ENCODE measurements at regions of chr4 and their contacts with region 1.

Region 1: GRCh38 chr4:137124278-137124932 is 407.9 kb downstream of the PCDH18 start:
- DNase-seq: no peak
- ATAC-seq: peak; percentile 80 to 99 (median 89)
- H3K4me3 ChIP-seq: peak overlapping the region in 10 of 12 donors; percentile 5 to 59 (median 40)
- H3K27ac ChIP-seq: no peak overlapping the region
- H3K4me1 ChIP-seq: no peaks in the 10 kb centered on the region
- H3K27me3 ChIP-seq: no peaks in the 10 kb centered on the region
- CTCF ChIP-seq: peak; percentile 33 to 75 (median 63)
- POLR2A ChIP-seq: no peak

Region 2: DNA sequence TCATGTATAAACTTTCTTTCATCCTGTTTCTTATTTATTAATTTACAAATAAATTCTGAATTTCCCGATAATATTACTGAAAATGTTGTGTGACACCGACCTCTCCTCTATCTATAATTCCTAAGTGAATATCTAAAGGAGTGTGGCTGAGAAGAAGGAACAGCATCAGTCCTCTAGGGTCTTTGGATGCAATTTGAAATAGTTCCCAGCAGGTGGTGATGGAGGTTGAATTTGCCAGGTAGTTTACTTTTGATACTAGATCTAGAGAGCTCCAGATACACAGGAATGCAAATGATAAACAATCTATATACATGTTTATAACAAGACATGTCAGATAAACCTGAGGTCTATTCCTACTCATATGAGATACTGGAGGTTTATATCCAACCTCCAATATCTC is 102.5 kb after region 1 on chr4:
- intact Hi-C with region 1: no loop called
- DNase-seq: no peak
- ATAC-seq: no peak
- H3K4me3 ChIP-seq: no peak overlapping the region
- H3K27ac ChIP-seq: no peak overlapping the region
- H3K4me1 ChIP-seq: no peaks in the 10 kb centered on the region
- H3K27me3 ChIP-seq: no peaks in the 10 kb centered on the region
- CTCF ChIP-seq: peak in 4 of 12 donors; percentile 15 to 31 (median 16)
- POLR2A ChIP-seq: no peak

Region 3: GRCh38 chr4:137524725-137525369 is 400.4 kb after region 1 on chr4:
- intact Hi-C with region 1: loop called in 3 of 10 experiments (anchors 10 kb)
- DNase-seq: no peak
- ATAC-seq: no peak
- H3K4me3 ChIP-seq: peak overlapping the region in 1 of 12 donors; percentile 25
- H3K27ac ChIP-seq: peak overlapping the region in 1 of 12 donors; percentile 6
- H3K4me1 ChIP-seq: peaks cover 0 to 28% (median 0%) of the 10 kb centered on the region in 12 donors
- H3K27me3 ChIP-seq: no peaks in the 10 kb centered on the region
- CTCF ChIP-seq: no peak
- POLR2A ChIP-seq: no peak

Region 4: DNA sequence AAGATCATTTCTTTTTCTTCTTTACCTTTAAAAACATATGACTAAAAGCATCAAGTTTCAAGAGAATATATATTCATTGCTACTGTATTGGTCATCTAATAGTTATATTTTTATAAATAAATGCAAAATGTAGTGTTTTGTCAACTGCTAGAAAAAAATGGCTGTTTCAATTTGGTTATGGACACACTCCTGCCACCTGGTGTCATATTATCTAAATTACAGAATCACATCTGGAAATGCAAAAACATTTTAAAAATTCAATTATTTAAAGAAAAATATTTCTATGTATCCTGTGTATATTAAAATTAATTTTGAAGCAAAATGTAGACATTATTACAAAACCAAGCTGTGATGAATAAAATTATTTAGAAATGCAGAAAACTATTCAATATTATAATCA is 737.3 kb after region 1 on chr4:
- intact Hi-C with region 1: loop called in 9 of 10 experiments (anchors 5 kb)
- DNase-seq: no peak
- ATAC-seq: no peak
- H3K4me3 ChIP-seq: no peak overlapping the region
- H3K27ac ChIP-seq: no peak overlapping the region
- H3K4me1 ChIP-seq: no peaks in the 10 kb centered on the region
- H3K27me3 ChIP-seq: no peaks in the 10 kb centered on the region
- CTCF ChIP-seq: peak in 11 of 12 donors; percentile 26 to 67 (median 45)
- POLR2A ChIP-seq: no peak

Region 5: DNA sequence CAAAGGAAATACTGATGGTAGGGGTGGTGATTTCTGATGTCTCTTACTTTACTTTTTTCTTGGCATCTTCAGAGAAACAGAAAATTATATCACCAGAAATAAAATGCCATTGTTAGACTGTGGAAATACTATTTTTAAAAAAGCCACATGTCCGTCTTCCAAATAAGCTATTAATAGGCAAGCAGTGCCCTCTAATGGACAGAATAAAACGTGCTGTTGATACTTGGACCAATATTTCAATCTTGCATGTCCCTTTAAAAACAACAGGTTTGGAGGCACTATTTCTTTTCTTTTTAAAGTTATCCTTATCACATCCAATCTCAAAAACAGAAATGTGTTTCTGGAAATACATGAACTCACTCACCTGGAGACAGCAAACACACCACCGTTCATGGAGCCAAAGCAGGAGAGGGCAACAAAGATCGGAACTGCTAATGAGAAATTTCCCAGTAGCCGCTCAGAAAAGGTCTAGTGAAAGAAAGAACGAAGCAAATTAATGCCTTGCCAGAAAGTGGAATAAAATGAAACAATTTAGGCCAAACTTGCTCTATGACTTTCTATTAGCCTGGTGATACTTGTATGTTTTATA is 1058.5 kb after region 1 on chr4:
- intact Hi-C with region 1: loop called in 6 of 10 experiments (anchors 5 to 10 kb)
- DNase-seq: peak in 1 of 5 donors; percentile 8
- ATAC-seq: peak; percentile 39 to 80 (median 70)
- H3K4me3 ChIP-seq: no peak overlapping the region
- H3K27ac ChIP-seq: no peak overlapping the region
- H3K4me1 ChIP-seq: peaks cover 0 to 18% (median 1%) of the 10 kb centered on the region in 12 donors
- H3K27me3 ChIP-seq: no peaks in the 10 kb centered on the region
- CTCF ChIP-seq: peak; percentile 48 to 81 (median 69)
- POLR2A ChIP-seq: no peak

Region 6: DNA sequence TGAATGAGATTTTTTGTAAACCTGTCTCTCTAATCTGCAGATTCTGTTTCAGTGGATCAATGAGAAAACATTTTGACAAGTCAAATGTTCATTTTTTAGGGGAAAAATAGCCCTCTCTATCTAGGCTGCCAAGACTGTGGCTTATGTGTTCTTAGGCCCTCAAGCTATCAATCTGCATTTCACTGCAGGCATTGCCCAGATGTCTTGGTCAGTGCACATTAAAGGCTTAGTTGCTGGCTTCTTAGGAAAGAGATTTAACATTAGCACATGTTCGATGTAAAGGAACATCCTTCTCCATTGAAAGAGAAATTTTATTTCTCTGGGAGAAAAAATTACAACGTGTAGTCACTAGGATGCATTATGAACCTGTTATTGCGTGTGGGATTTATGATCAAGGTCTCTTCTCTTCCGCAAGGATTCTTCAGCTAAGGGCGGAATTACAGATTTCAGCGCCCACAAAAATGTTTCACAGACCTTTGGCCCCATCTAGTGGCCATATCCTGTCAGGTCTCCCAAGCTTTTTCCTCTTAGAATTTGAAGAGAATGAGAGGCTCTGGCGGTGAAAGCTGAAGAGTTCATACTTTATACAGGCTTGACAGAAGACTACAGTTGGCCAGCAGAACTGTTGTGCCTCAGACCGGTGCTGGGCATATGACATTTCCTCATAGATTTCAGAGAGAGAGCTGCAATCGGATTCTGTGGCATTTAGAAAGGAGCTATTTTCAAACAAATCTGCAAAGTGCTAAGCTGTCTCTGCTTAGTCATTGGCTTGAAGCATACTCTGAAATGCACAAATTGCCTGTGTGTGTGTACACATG is 1746.5 kb after region 1 on chr4:
- intact Hi-C with region 1: loop called in 2 of 10 experiments (anchors 5 to 10 kb)
- DNase-seq: peak in 4 of 5 donors; percentile 31 to 56 (median 41)
- ATAC-seq: peak in 3 of 4 donors; percentile 57 to 68 (median 68)
- H3K4me3 ChIP-seq: no peak overlapping the region
- H3K27ac ChIP-seq: no peak overlapping the region
- H3K4me1 ChIP-seq: peaks cover 0 to 8% (median 0%) of the 10 kb centered on the region in 12 donors
- H3K27me3 ChIP-seq: peaks cover 0 to 14% (median 0%) of the 10 kb centered on the region in 9 donors
- CTCF ChIP-seq: peak; percentile 73 to 91 (median 84)
- POLR2A ChIP-seq: no peak